ENCODE measurements at regions of chrX and their contacts with region 1.

Region 1: GRCh38 chrX:48083212-48083611 is 11.8 kb upstream of the ZNF630 start:
- DNase-seq: peak; percentile 54
- CTCF ChIP-seq: peak; percentile 51

Region 2: GRCh38 chrX:47776292-47777006 is 306.8 kb before region 1 on chrX:
- in situ Hi-C with region 1: no loop called
- DNase-seq: no peak
- CTCF ChIP-seq: no peak

Region 3: GRCh38 chrX:48475774-48476577 is 392.8 kb after region 1 on chrX and contains the start of gene FTSJ1:
- in situ Hi-C with region 1: loop called (anchors 25 kb)
- DNase-seq: peak; percentile 83
- CTCF ChIP-seq: no peak